ENCODE measurements at regions of chr13 and their contacts with region 1.

Region 1: DNA sequence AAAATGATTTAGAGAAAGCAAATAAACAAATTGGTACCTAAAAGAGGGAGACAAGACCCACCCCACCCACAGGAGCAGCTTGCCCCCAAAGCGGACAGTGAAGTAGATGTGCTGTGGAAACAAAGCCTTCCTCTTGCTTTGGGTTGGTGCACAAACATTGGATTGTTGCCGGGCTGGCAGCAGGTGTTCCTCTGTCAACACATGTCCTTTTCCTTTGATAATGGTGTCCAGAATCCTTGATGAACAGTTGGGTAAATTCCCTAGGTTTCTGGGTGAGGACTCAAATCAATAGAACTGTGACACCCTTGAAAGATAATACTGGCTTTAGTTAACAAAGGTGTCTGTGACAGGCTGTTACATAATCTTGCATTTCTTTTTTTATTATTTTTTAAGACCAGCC is 311.8 kb downstream of the SPRY2 start:
- DNase-seq: no peak
- ATAC-seq: no peak
- H3K4me3 ChIP-seq: no peak overlapping the region
- H3K27ac ChIP-seq: no peak overlapping the region
- H3K4me1 ChIP-seq: peaks cover 8% of the 10 kb centered on the region; the same call in 1 of the 2 replicates
- H3K27me3 ChIP-seq: no peaks in the 10 kb centered on the region
- CTCF ChIP-seq: no peak

Region 2: GRCh38 chr13:79901336-79901735 is 127.8 kb before region 1 on chr13:
- CTCF ChIA-PET with region 1: no interaction called
- POLR2A ChIA-PET with region 1: no interaction called
- in situ Hi-C with region 1: no loop called
- intact Hi-C with region 1: no loop called
- DNase-seq: no peak
- ATAC-seq: no peak
- H3K4me3 ChIP-seq: no peak overlapping the region
- H3K27ac ChIP-seq: no peak overlapping the region
- H3K4me1 ChIP-seq: no peaks in the 10 kb centered on the region
- H3K27me3 ChIP-seq: no peaks in the 10 kb centered on the region
- CTCF ChIP-seq: no peak

Region 3: DNA sequence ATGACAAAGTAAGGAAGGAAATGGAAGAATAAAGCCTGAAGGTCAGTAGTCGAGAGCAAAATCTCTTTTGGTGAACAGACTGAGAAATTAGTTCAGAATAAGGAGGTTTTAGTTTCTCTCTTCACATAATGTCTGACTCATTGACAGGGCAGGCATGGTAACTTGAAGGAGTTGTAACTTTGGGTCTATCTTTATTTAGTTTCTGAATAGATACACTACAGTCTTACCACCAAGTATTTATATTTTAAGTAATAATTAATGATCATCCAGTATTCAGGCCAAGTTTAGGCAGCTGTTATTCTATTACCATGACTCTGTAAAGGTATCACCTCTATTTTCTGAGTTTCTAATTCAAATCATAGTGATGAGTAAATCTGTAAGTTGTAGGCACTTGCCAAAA is 91.9 kb after region 1 on chr13:
- CTCF ChIA-PET with region 1: no interaction called
- POLR2A ChIA-PET with region 1: no interaction called
- in situ Hi-C with region 1: no loop called
- intact Hi-C with region 1: no loop called
- DNase-seq: no peak
- ATAC-seq: no peak
- H3K4me3 ChIP-seq: no peak overlapping the region
- H3K27ac ChIP-seq: no peak overlapping the region
- H3K4me1 ChIP-seq: no peaks in the 10 kb centered on the region
- H3K27me3 ChIP-seq: no peaks in the 10 kb centered on the region
- CTCF ChIP-seq: no peak

Region 4: GRCh38 chr13:80132741-80133601 is 103.8 kb after region 1 on chr13:
- CTCF ChIA-PET with region 1: no interaction called
- POLR2A ChIA-PET with region 1: no interaction called
- in situ Hi-C with region 1: no loop called
- intact Hi-C with region 1: loop called (anchors 10 kb)
- DNase-seq: no peak
- ATAC-seq: peak; percentile 96
- H3K4me3 ChIP-seq: peak overlapping the region; percentile 25 to 57
- H3K27ac ChIP-seq: peak overlapping the region; percentile 89
- H3K4me1 ChIP-seq: peaks cover 20% of the 10 kb centered on the region
- H3K27me3 ChIP-seq: no peaks in the 10 kb centered on the region
- CTCF ChIP-seq: no peak

Measured in Panc1 (cell line).